Right ventricle myocardium superior (tissue), 1 donor: ENCODE measurements at regions of chr16 and their contacts with region 1.

Region 1: DNA sequence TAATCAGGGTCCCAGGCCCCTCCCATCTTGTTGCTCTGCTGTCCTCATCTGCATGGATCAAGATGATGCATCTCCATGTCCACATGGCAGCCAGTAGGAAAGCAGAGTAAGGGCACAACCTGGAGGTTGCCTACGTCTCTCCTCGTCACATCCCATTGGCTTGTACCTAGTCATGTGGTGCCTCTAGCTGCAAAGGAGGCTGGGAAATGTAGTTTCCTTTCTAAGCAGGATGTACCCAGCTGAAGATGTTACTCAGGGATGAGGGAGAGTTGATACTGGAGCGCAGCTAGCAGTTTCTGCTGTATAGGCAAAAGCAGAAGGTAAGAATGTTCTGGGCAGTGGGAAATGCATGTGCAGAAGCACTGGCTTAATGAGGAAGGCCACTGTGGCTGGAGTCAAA is 20.8 kb downstream of the ABCC1 start:
- DNase-seq: no peak
- ATAC-seq: no peak

Region 2: GRCh38 chr16:15907863-15908478 is 62.2 kb before region 1 on chr16:
- intact Hi-C with region 1: loop called (anchors 10 kb)
- DNase-seq: no peak
- ATAC-seq: no peak